AG04450 (cell line): ENCODE measurements at regions of chr12 and their contacts with region 1.

Region 1: DNA sequence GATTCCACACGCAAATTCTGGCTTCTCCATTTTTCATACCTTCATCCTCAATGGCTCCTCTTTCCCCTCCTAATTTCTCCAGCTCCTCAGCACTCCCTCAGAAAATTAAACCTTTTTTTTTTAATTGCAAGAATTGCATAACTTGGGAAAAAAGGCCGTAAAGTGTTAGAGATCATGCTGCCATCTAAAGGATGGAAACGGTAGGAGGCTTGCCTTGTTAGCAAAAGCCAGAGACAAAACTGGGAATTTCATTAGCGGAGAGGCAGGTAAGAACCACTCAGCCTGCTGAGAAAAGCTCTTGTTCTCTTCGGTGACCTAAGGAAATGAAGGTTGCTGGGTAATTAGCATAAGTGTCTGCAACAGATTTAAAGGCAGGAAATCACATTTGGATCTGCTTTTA is 204.3 kb downstream of the AEBP2 start:
- DNase-seq: no peak
- H3K4me3 ChIP-seq: no peak overlapping the region
- H3K27ac ChIP-seq: no peak overlapping the region
- H3K27me3 ChIP-seq: no peaks in the 10 kb centered on the region
- CTCF ChIP-seq: peak; percentile 80

Region 2: DNA sequence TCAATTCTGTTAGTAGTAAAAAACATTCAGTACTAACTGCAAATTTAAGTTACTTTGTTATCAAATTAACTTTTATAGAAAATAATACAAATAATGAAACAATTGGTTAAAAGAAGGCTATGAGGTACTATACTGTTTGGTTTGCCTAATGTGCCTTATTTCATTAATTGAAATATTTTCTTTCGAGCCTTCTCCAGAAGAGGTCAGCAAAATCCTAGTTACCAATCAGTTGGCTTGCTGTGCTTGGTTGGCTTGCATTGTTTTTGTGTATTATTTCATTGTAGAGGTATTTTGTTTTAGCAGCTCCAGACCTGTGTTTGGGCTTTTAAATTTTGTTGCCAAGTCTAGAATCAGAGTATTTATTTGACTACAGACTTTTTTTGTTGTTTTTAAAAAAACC is 135.8 kb before region 1 on chr12:
- CTCF ChIA-PET with region 1: interaction called, 20 read pairs
- POLR2A ChIA-PET with region 1: no interaction called
- DNase-seq: no peak
- H3K4me3 ChIP-seq: no peak overlapping the region
- H3K27ac ChIP-seq: no peak overlapping the region
- H3K27me3 ChIP-seq: no peaks in the 10 kb centered on the region
- CTCF ChIP-seq: peak; percentile 28; the same call in 1 of the 2 replicates

Region 3: GRCh38 chr12:19657118-19657767 is 13.6 kb after region 1 on chr12:
- CTCF ChIA-PET with region 1: interaction called, 15 read pairs
- POLR2A ChIA-PET with region 1: no interaction called
- DNase-seq: no peak
- H3K4me3 ChIP-seq: no peak overlapping the region
- H3K27ac ChIP-seq: no peak overlapping the region
- H3K27me3 ChIP-seq: no peaks in the 10 kb centered on the region
- CTCF ChIP-seq: no peak